Activated T-helper 1 cell treated with anti-CD3 and anti-CD28 coated beads, Interleukin-12 subunit alpha, Interleukin-12 subunit beta, Interleukin-2, Interleukin-4 antibody, amounts not matched to agents 30 ng/mL and 10 ng/mL and 1 ng/mL, durations not matched to agents 14 hours and 24 hours and 36 hours (primary cell): ENCODE measurements at regions of chr5 and their contacts with region 1.

Region 1: DNA sequence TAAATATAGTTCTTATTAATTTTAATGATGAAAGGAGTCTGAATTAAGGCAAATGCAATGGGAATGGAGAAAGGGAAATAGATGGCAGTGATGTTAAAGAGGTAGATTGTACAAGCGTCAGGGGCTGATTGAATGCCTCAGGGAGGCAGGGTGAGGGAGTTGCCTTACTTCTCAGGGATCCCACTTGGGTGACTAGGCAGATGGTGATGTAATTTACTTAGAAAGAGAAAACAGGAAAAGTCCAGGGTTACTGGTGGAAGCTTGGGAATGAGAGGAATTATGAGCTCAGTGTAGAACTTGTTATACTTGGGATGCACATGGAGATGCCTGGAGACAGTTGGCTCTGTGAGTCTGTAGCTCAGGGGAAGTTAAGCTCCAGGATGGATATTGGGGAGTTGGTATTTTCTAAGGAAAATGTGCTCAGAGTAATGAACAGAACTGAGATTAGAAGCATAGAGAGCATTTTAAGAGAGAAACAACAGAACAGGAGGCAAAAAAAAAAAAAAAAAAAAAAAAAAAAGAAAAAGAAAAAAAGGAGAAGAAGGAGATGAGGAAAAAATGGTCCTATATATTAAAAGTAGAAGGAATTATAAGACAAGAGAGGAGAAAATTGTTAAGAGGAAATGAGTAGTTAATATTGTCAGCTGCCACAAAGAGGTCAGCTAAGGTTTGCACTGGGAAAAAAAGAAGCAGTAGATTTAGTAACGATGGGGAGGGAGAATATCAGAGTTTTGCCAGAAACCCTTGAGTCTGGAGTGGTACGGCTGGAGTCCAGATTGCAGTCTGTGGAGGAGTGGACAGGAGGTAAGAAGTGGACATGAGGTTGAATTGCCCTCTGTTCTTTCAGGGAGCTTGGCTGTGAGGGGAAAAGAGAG is 88.0 kb upstream of the ELL2 start:
- DNase-seq: no peak
- H3K4me3 Mint-ChIP-seq: no peak overlapping the region
- H3K27ac Mint-ChIP-seq: no peak overlapping the region
- H3K4me1 Mint-ChIP-seq: peaks cover 3% of the 10 kb centered on the region
- H3K27me3 Mint-ChIP-seq: no peaks in the 10 kb centered on the region

Region 2: DNA sequence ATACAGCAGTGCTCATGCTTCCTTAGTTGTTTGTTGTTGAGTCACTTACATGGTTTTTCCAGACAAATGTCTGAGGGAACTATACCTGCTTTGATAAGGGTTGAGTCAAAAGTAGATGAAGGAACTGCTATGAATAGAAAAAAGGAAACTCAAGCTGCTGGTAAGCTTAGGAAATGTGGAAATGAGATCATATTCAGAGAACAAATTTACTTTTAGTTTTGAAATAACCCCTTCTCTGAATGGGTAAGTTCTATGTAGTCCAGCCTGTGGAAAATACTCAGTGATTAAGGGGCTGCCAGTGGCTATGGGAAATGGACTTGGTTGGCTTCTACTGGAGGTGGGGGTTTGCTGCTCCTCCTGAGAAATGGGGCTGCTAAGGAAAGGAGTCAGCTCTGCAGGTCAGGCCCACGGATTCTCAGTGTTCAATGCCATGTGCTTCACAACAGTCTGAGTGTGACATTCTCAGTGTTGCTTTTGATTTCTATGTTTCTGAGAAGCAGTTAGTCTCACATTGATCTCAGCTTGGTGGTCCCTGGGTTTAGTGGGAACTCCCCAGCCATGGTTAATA is 179.4 kb before region 1 on chr5:
- intact Hi-C with region 1: no loop called
- DNase-seq: peak; percentile 20
- H3K4me3 Mint-ChIP-seq: peak overlapping the region; percentile 64
- H3K27ac Mint-ChIP-seq: peak overlapping the region; percentile 97
- H3K4me1 Mint-ChIP-seq: peaks cover 55% of the 10 kb centered on the region
- H3K27me3 Mint-ChIP-seq: no peaks in the 10 kb centered on the region

Region 3: GRCh38 chr5:95975703-95976102 is 73.9 kb before region 1 on chr5:
- intact Hi-C with region 1: loop called (anchors 5 kb)
- DNase-seq: no peak
- H3K4me3 Mint-ChIP-seq: no peak overlapping the region
- H3K27ac Mint-ChIP-seq: no peak overlapping the region
- H3K4me1 Mint-ChIP-seq: peaks cover 9% of the 10 kb centered on the region
- H3K27me3 Mint-ChIP-seq: peaks cover 2% of the 10 kb centered on the region